Tibial artery (tissue), 4 donors: ENCODE measurements at regions of chr9 and their contacts with region 1.

Region 1: DNA sequence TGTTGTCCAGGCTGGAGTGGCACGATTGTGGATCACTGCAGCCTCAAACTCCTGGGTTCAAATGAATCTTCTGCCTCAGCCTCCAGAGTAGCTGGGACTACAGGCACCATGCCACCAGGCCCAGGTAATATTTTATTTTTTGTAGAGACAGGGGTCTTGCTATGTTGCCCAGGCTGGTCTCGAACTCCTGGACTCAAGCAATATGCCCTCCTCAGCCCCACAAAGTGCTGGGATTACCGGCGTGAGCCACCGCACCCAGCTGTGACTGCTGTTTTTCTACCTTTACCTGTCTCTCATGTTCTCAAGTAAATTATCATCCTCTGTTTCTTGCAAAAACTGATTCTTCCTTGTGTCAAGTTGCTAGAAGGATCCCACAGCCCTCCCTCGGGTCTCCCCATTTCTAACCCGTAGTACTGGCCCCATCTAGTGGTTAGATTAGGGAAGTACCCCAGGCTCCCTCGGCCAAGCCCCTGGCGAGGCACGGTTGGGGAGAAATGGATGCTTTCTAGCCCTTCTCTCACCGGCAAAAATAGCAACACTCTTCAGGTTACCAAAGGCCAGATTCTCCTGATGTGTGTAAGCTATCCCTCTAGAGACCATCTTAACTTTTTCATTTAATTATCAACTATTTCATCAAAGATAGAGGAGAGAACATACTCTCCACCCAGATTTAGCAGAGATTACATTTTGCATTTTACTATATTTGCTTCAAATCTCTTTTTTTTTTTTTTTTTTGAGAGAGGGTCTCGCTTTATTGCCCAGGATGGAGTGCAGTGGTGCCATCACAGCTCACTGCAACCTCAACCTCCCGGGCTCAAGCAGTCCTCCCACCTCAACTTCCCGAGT is 19.2 kb upstream of the TOR1B start:
- DNase-seq: peak; percentile 73 to 81
- H3K4me3 ChIP-seq: no peak overlapping the region
- H3K27ac ChIP-seq: no peak overlapping the region
- H3K4me1 ChIP-seq: no peaks in the 10 kb centered on the region
- H3K27me3 ChIP-seq: no peaks in the 10 kb centered on the region
- CTCF ChIP-seq: peak; percentile 93 to 96

Region 2: DNA sequence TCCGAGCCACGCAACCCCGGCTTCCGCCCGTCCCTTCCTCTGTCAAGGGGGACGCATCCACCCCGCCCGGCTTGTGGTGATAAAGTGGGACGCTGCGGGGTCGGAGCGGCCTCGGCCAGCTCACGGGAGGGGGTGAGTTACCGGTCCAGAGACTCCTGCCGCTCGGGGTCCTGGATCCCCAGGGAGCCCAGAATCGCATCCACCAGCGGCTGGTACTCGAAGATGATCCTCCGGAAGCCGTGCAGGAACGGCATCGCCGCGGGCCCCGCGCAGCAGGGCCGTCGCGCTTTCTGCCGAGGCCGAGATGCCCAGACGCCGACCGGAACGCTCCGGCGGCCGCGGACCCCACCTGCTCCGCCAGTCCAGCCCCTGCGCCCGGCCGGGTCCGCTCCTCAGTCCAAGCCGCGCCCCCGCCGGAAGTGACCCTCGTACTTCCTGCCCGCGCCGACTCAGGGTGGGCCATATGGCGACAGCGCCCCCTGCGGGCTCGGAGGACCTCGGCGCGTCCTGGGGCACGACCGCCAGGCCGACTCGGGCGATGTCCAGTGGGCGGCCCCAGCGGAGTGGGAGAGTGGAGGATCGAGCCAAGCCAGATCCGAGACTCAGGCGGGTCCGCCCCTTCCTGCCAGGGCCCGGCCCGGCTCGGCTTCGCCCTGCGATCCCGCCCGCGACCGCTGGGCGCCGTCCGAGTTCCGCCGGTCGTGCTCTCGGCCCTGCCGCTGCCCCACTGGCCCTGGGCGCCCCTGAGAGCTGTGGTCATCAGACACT is 141.8 kb before region 1 on chr9 and contains the start of gene ASB6:
- intact Hi-C with region 1: loop called (anchors 1 kb)
- DNase-seq: peak; percentile 96 to 99
- H3K4me3 ChIP-seq: peak within 1 kb of the TSS; percentile 92
- H3K27ac ChIP-seq: peak within 1 kb of the TSS; percentile 79 to 93
- H3K4me1 ChIP-seq: peaks cover 0 to 33% (median 27%) of the 10 kb centered on the region in 4 donors
- H3K27me3 ChIP-seq: no peaks in the 10 kb centered on the region
- CTCF ChIP-seq: peak; percentile 100

Region 3: GRCh38 chr9:129726322-129727160 is 57.2 kb before region 1 on chr9:
- intact Hi-C with region 1: no loop called
- DNase-seq: peak; percentile 84 to 92
- H3K4me3 ChIP-seq: peak overlapping the region; percentile 7 to 34
- H3K27ac ChIP-seq: peak overlapping the region; percentile 63
- H3K4me1 ChIP-seq: peaks cover 0 to 31% (median 18%) of the 10 kb centered on the region in 4 donors
- H3K27me3 ChIP-seq: no peaks in the 10 kb centered on the region
- CTCF ChIP-seq: peak; percentile 91 to 98

Region 4: GRCh38 chr9:129737479-129738274 is 46.1 kb before region 1 on chr9:
- intact Hi-C with region 1: loop called (anchors 2 kb)
- DNase-seq: peak; percentile 79 to 91
- H3K4me3 ChIP-seq: peak overlapping the region; percentile 50 to 59
- H3K27ac ChIP-seq: peak overlapping the region; percentile 60 to 69
- H3K4me1 ChIP-seq: peaks cover 0 to 11% (median 2%) of the 10 kb centered on the region in 4 donors
- H3K27me3 ChIP-seq: peaks cover 0 to 4% of the 10 kb centered on the region in 2 donors
- CTCF ChIP-seq: peak; percentile 92 to 97